PC-3 (cell line): ENCODE measurements at regions of chr3 and their contacts with region 1.

Region 1: GRCh38 chr3:197009532-197010019 is 20.0 kb downstream of the MELTF start:
- DNase-seq: no peak
- ATAC-seq: no peak
- H3K4me3 ChIP-seq: no peak overlapping the region
- H3K27ac ChIP-seq: no peak overlapping the region
- H3K4me1 ChIP-seq: peaks cover 4% of the 10 kb centered on the region; the same call in 1 of the 2 replicates
- H3K27me3 ChIP-seq: no peaks in the 10 kb centered on the region
- CTCF ChIP-seq: no peak

Region 2: DNA sequence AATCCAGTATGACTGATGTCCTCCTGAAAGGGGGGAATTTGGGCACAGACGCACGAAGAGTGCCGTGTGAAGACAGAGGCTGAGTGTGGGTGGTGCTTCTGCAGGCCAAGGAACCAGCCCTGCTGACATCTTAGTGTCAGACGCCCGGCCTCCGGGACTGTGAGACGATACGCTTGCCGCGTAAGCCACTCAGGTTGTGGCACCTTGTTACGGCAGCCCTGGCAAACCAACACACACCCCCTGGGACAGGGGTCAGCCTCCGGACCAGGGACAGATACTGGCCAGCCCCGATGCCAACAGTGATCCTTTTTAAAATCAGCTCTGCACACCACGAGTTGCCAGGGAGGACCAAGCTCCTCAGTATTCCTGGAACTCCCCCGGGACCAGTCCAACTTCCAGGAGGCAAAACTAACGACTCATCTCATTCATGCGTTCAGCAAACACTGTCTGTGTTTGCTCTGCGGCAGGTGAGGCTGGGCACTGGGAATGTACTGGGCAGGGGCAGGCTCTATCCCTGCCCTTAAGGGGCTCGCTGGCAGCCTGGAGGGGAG is 19.8 kb before region 1 on chr3:
- CTCF ChIA-PET with region 1: no interaction called
- POLR2A ChIA-PET with region 1: no interaction called
- intact Hi-C with region 1: loop called (anchors 1 kb)
- DNase-seq: peak; percentile 39
- ATAC-seq: peak; percentile 55
- H3K4me3 ChIP-seq: no peak overlapping the region
- H3K27ac ChIP-seq: no peak overlapping the region
- H3K4me1 ChIP-seq: no peaks in the 10 kb centered on the region
- H3K27me3 ChIP-seq: no peaks in the 10 kb centered on the region
- CTCF ChIP-seq: no peak

Region 3: GRCh38 chr3:197216169-197216860 is 206.7 kb after region 1 on chr3:
- CTCF ChIA-PET with region 1: no interaction called
- POLR2A ChIA-PET with region 1: interaction called, 12 read pairs
- intact Hi-C with region 1: no loop called
- DNase-seq: peak; percentile 54
- ATAC-seq: peak; percentile 58
- H3K4me3 ChIP-seq: no peak overlapping the region
- H3K27ac ChIP-seq: peak overlapping the region; percentile 47
- H3K4me1 ChIP-seq: peaks cover 19% of the 10 kb centered on the region
- H3K27me3 ChIP-seq: no peaks in the 10 kb centered on the region
- CTCF ChIP-seq: no peak